Ascending aorta (tissue), 2 donors: ENCODE measurements at regions of chr6 and their contacts with region 1.

Region 1: GRCh38 chr6:28266962-28267694 is at the start of gene ZSCAN26:
- DNase-seq: peak; percentile 21 to 89
- H3K4me3 ChIP-seq: peak within 1 kb of the TSS; percentile 70 to 80
- H3K27ac ChIP-seq: peak within 1 kb of the TSS; percentile 76 to 82
- H3K4me1 ChIP-seq: peaks cover 0 to 15% of the 10 kb centered on the region in 2 donors
- H3K27me3 ChIP-seq: no peaks in the 10 kb centered on the region
- CTCF ChIP-seq: no peak
- total RNA-seq, gene ZSCAN26: 2.6 TPM

Region 2: GRCh38 chr6:28136585-28137504 is 130.3 kb before region 1 on chr6:
- intact Hi-C with region 1: loop called (anchors 5 kb)
- DNase-seq: peak; percentile 60 to 95
- H3K4me3 ChIP-seq: peak overlapping the region; percentile 74 to 97
- H3K27ac ChIP-seq: peak overlapping the region; percentile 95 to 98
- H3K4me1 ChIP-seq: peaks cover 0 to 26% of the 10 kb centered on the region in 2 donors
- H3K27me3 ChIP-seq: no peaks in the 10 kb centered on the region
- CTCF ChIP-seq: no peak

Region 3: GRCh38 chr6:28349892-28350737 is 83.0 kb after region 1 on chr6 and contains the start of gene ZKSCAN3:
- intact Hi-C with region 1: loop called (anchors 2 kb)
- DNase-seq: peak; percentile 29 to 90
- H3K4me3 ChIP-seq: peak within 1 kb of the TSS; percentile 64 to 90
- H3K27ac ChIP-seq: peak within 1 kb of the TSS; percentile 50 to 60
- H3K4me1 ChIP-seq: peaks cover 0 to 10% of the 10 kb centered on the region in 2 donors
- H3K27me3 ChIP-seq: no peaks in the 10 kb centered on the region
- CTCF ChIP-seq: no peak
- total RNA-seq, gene ZKSCAN3: 0.21 TPM

Region 4: DNA sequence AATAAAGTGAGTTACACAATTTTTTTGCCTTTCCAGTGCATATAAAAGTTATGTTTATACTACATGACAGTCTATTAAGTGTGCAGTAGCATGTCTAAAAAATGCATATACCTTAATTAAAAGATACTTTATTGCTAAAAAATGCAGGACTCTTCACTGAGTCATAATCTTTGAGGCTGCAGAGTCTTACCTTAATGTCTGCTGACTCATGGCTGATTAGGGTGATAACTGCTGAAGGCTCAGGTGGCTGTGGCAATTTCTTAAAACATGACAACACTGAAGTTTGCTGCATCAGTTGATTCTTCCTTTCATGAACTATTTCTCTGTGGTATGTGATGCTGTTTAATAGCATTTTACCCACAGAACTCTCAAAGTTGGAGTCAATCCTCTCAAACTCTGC is 157.0 kb after region 1 on chr6:
- intact Hi-C with region 1: no loop called
- DNase-seq: no peak
- H3K4me3 ChIP-seq: no peak overlapping the region
- H3K27ac ChIP-seq: no peak overlapping the region
- H3K4me1 ChIP-seq: no peaks in the 10 kb centered on the region
- H3K27me3 ChIP-seq: no peaks in the 10 kb centered on the region
- CTCF ChIP-seq: no peak

Region 5: DNA sequence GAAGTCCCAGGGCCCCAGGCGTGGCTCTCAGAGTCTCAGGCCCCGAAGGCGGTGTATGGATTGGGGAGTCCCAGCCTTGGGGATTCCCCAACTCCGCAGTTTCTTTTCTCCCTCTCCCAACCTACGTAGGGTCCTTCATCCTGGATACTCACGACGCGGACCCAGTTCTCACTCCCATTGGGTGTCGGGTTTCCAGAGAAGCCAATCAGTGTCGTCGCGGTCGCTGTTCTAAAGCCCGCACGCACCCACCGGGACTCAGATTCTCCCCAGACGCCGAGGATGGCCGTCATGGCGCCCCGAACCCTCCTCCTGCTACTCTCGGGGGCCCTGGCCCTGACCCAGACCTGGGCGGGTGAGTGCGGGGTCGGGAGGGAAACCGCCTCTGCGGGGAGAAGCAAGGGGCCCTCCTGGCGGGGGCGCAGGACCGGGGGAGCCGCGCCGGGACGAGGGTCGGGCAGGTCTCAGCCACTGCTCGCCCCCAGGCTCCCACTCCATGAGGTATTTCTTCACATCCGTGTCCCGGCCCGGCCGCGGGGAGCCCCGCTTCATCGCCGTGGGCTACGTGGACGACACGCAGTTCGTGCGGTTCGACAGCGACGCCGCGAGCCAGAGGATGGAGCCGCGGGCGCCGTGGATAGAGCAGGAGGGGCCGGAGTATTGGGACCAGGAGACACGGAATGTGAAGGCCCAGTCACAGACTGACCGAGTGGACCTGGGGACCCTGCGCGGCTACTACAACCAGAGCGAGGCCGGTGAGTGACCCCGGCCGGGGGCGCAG is 1675.3 kb after region 1 on chr6 and contains the start of gene HLA-A:
- intact Hi-C with region 1: no loop called
- DNase-seq: peak; percentile 85 to 98
- H3K4me3 ChIP-seq: peak within 1 kb of the TSS; percentile 67 to 68
- H3K27ac ChIP-seq: peak within 1 kb of the TSS; percentile 85 to 94
- H3K4me1 ChIP-seq: peaks cover 0 to 4% of the 10 kb centered on the region in 2 donors
- H3K27me3 ChIP-seq: no peaks in the 10 kb centered on the region
- CTCF ChIP-seq: no peak
- total RNA-seq, gene HLA-A: 1,099 TPM